ENCODE measurements at regions of chr19 and their contacts with region 1.

Region 1: GRCh38 chr19:13718733-13719132 is 45.6 kb upstream of the MRI1 start:
- DNase-seq: peak; percentile 61
- H3K4me3 ChIP-seq: no peak overlapping the region
- H3K27ac ChIP-seq: no peak overlapping the region
- H3K4me1 ChIP-seq: no peaks in the 10 kb centered on the region
- H3K27me3 ChIP-seq: no peaks in the 10 kb centered on the region
- CTCF ChIP-seq: peak; percentile 45 to 71

Region 2: GRCh38 chr19:13277104-13277809 is 441.5 kb before region 1 on chr19:
- CTCF ChIA-PET with region 1: no interaction called
- dilution Hi-C with region 1: no loop called
- in situ Hi-C with region 1: loop called (anchors 10 kb)
- intact Hi-C with region 1: loop called (anchors 1 kb)
- DNase-seq: peak; percentile 63
- H3K4me3 ChIP-seq: no peak overlapping the region
- H3K27ac ChIP-seq: no peak overlapping the region
- H3K4me1 ChIP-seq: no peaks in the 10 kb centered on the region
- H3K27me3 ChIP-seq: no peaks in the 10 kb centered on the region
- CTCF ChIP-seq: peak; percentile 50 to 55

Region 3: GRCh38 chr19:13366529-13367143 is 352.1 kb before region 1 on chr19:
- CTCF ChIA-PET with region 1: no interaction called
- dilution Hi-C with region 1: no loop called
- in situ Hi-C with region 1: no loop called
- intact Hi-C with region 1: loop called (anchors 2 kb)
- DNase-seq: peak; percentile 5
- H3K4me3 ChIP-seq: no peak overlapping the region
- H3K27ac ChIP-seq: no peak overlapping the region
- H3K4me1 ChIP-seq: no peaks in the 10 kb centered on the region
- H3K27me3 ChIP-seq: no peaks in the 10 kb centered on the region
- CTCF ChIP-seq: peak; percentile 65 to 67

Region 4: GRCh38 chr19:13597640-13598039 is 121.1 kb before region 1 on chr19:
- CTCF ChIA-PET with region 1: interaction called, 8 read pairs
- dilution Hi-C with region 1: loop called (anchors 10 kb)
- in situ Hi-C with region 1: loop called in 1 of 2 experiments (anchors 5 kb)
- intact Hi-C with region 1: loop called (anchors 1 kb)
- DNase-seq: peak; percentile 50
- H3K4me3 ChIP-seq: no peak overlapping the region
- H3K27ac ChIP-seq: no peak overlapping the region
- H3K4me1 ChIP-seq: no peaks in the 10 kb centered on the region
- H3K27me3 ChIP-seq: no peaks in the 10 kb centered on the region
- CTCF ChIP-seq: peak; percentile 44 to 69

Region 5: GRCh38 chr19:13621413-13621812 is 97.3 kb before region 1 on chr19:
- CTCF ChIA-PET with region 1: no interaction called
- dilution Hi-C with region 1: no loop called
- in situ Hi-C with region 1: no loop called
- intact Hi-C with region 1: loop called (anchors 1 kb)
- DNase-seq: peak; percentile 98
- H3K4me3 ChIP-seq: no peak overlapping the region
- H3K27ac ChIP-seq: no peak overlapping the region
- H3K4me1 ChIP-seq: peaks cover 9% of the 10 kb centered on the region
- H3K27me3 ChIP-seq: no peaks in the 10 kb centered on the region
- CTCF ChIP-seq: peak; percentile 33 to 60

Region 6: DNA sequence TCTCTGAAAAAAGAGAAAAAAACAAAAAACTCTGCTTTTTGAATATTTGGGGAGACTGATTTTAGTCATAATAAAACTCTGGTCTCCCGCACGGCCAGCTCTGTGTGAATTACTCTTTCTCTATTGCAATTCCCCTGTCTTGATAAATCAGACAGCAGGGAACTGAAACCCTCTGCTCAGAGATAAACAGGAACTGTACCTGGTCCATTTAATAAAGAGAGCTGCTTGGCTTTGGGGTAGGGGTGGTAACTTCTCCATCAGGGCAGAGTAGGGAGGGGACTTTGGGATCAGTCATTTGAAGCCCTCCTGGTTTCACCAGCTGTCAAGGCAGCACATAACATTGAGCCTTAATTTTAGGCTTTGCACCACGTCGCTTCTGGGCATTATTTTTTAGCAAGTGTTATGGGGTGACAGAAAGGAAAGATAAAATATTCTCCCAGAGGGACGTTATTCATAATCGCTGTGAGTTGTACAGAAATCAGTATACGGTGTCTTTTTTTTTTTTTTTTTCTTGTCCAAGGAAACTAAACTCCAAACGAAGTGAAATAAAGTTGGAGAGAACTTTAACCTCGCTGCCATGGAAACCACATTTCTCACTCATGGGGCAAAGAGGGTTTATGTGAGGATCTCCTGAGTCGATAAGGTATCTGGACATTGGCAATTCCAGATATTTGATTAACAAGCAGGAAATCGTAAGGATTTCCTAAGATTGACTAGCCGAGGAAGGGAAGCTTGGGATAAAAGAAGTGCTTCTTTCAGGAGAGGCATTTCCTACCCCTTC is 53.4 kb before region 1 on chr19:
- CTCF ChIA-PET with region 1: no interaction called
- dilution Hi-C with region 1: loop called (anchors 5 kb)
- in situ Hi-C with region 1: no loop called
- intact Hi-C with region 1: no loop called
- DNase-seq: no peak
- H3K4me3 ChIP-seq: no peak overlapping the region
- H3K27ac ChIP-seq: no peak overlapping the region
- H3K4me1 ChIP-seq: no peaks in the 10 kb centered on the region
- H3K27me3 ChIP-seq: no peaks in the 10 kb centered on the region
- CTCF ChIP-seq: no peak

Region 7: GRCh38 chr19:13804830-13805683 is 86.3 kb after region 1 on chr19:
- CTCF ChIA-PET with region 1: no interaction called
- dilution Hi-C with region 1: no loop called
- in situ Hi-C with region 1: no loop called
- intact Hi-C with region 1: no loop called
- DNase-seq: no peak
- H3K4me3 ChIP-seq: no peak overlapping the region
- H3K27ac ChIP-seq: no peak overlapping the region
- H3K4me1 ChIP-seq: no peaks in the 10 kb centered on the region
- H3K27me3 ChIP-seq: no peaks in the 10 kb centered on the region
- CTCF ChIP-seq: peak in 1 of 2 donors; percentile 24

Region 8: DNA sequence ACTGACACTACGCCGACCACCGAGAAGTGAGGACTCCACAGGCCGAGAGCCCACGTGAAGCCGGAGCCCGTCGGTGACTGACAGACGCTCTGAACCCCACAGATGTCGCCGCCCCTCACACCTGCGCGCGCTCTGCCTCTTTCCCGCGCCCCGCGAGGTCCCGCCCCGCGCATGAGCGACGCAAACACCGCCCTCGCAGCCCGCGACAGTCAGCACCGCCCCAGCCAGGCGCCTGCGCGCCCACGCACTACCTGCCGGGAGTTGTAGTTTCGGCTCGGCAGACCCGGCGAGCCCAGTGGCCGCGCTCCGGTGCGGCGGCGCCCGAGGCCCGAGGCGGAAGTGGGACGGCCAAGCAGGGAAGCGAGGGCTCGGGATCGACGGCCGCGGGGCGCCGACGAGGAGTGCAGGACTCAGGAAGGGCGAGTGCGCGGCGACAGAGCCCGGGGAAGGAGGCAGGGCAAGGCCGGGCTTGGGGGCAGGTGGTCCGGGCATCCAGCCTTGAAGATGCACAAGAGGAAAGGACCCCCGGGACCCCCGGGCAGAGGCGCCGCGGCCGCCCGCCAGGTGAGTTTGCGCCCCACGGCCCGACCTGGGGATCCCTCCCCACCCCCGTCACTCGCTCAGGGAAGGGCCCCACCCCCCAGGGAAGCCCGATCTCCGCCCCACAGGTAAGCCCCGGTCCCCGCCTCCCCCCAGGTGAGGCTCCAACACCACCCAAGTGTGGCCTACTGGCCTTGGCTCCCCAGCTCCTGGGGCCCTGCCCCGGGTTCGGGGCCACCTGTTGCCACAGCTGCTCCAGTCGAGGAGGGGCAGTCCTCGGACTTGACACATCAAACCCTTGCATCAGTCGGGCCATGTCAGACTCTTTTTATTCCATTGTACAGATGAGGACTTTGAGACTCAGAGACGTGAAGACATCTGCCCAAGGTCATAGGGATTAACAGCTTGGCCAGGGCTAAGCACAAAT is 187.5 kb after region 1 on chr19 and contains the starts of genes BRME1 and CC2D1A:
- CTCF ChIA-PET with region 1: no interaction called
- dilution Hi-C with region 1: no loop called
- in situ Hi-C with region 1: no loop called
- intact Hi-C with region 1: no loop called
- DNase-seq: peak; percentile 86
- H3K4me3 ChIP-seq: peak within 1 kb of the TSS; percentile 82 to 99 (median 91)
- H3K27ac ChIP-seq: no peak within 1 kb of the TSS
- H3K4me1 ChIP-seq: peaks cover 9% of the 10 kb centered on the region
- H3K27me3 ChIP-seq: no peaks in the 10 kb centered on the region
- CTCF ChIP-seq: no peak
- total RNA-seq, gene BRME1: 1.0 to 3.8 TPM
- total RNA-seq, gene CC2D1A: 31.7 to 58.8 TPM

Measured in mammary epithelial cell (primary cell).